A549 (cell line): ENCODE measurements at regions of chr7 and their contacts with region 1.

Region 1: GRCh38 chr7:121395961-121396757 is at the start of gene FAM3C:
- DNase-seq: peak; percentile 75 to 90
- ATAC-seq: peak; percentile 93 to 99
- H3K4me3 ChIP-seq: peak within 1 kb of the TSS; percentile 96
- H3K27ac ChIP-seq: peak within 1 kb of the TSS; percentile 78 to 95
- H3K4me1 ChIP-seq: peaks cover 24% of the 10 kb centered on the region
- CTCF ChIP-seq: peak; percentile 85
- EP300 ChIP-seq: no peak
- POLR2A ChIP-seq: peak; percentile 58
- RAD21 ChIP-seq: 0 out of 5 replicates have a peak, but pooled peaks of 1 of the 2 experiments have one; percentile 32
- polyA plus RNA-seq, gene FAM3C: 28.7 and 46.4 TPM in 2 replicates

Region 2: GRCh38 chr7:120950539-120951308 is 445.4 kb before region 1 on chr7 and contains the start of gene ING3:
- CTCF ChIA-PET with region 1: no interaction called
- POLR2A ChIA-PET with region 1: interaction called, 10 read pairs
- DNase-seq: peak; percentile 72 to 97
- ATAC-seq: peak; percentile 99
- H3K4me3 ChIP-seq: peak within 1 kb of the TSS; percentile 68
- H3K27ac ChIP-seq: peak within 1 kb of the TSS; percentile 95 to 97
- H3K4me1 ChIP-seq: peaks cover 11% of the 10 kb centered on the region; the same call in 2 of the 3 replicates
- CTCF ChIP-seq: no peak
- EP300 ChIP-seq: no peak
- POLR2A ChIP-seq: peak; percentile 42
- RAD21 ChIP-seq: no peak
- polyA plus RNA-seq, gene ING3: 6.9 and 11.3 TPM in 2 replicates

Region 3: GRCh38 chr7:121313793-121314676 is 82.1 kb before region 1 on chr7:
- CTCF ChIA-PET with region 1: no interaction called
- POLR2A ChIA-PET with region 1: no interaction called
- DNase-seq: no peak
- ATAC-seq: no peak
- H3K4me3 ChIP-seq: no peak overlapping the region
- H3K27ac ChIP-seq: no peak overlapping the region
- H3K4me1 ChIP-seq: no peaks in the 10 kb centered on the region
- CTCF ChIP-seq: no peak
- EP300 ChIP-seq: no peak
- POLR2A ChIP-seq: no peak
- RAD21 ChIP-seq: no peak

Region 4: DNA sequence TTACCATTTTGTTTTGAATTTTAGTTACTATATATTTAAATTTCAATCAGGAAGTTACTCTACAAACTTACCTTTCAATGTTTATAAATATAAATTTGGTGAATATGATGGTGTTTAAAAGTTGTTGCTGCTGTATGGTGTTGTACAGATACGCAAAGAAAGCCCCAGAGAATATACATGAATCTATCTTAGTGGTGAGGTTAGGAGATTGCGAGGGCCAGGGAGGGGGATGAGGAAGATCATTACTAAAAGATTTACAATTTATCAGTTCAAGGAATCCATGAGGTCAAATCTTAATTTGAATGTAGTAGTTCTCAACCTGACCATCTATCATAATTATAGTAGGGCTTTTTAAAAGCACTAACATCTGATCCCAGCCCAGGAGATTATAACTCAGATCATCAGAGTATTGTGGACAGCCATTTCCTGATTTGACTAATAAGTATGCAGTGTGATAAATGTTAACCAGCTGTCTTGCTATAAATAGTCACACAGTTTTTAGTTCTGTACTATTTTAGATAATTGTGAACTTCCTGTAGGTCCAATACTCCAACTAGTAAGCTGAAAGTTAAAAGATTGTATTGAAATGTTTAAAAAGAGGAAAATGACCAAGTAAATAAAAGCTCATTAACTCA is 23.7 kb before region 1 on chr7:
- CTCF ChIA-PET with region 1: interaction called, 21 read pairs
- POLR2A ChIA-PET with region 1: no interaction called
- DNase-seq: no peak
- ATAC-seq: no peak
- H3K4me3 ChIP-seq: no peak overlapping the region
- H3K27ac ChIP-seq: no peak overlapping the region
- H3K4me1 ChIP-seq: peaks cover 5% of the 10 kb centered on the region; the same call in 2 of the 3 replicates
- CTCF ChIP-seq: no peak
- EP300 ChIP-seq: no peak
- POLR2A ChIP-seq: no peak
- RAD21 ChIP-seq: no peak

Region 5: DNA sequence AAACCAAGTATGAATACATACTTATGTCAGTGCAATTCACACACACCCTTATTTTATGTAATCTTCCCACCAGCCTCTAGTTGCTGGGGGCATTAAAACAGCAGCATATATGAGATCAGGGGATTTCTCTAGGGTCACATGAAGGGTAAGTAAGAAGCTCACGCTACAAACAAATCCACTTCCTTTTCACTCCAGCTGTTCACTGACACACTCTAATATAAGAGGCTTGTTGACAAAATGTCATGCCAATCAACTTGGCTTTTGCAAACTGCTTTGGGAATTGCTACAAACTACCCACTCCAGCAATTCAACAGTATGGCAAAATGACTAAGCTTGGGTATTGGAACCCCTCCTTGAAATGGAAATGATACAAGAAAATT is 10.4 kb before region 1 on chr7:
- CTCF ChIA-PET with region 1: interaction called, 62 read pairs
- POLR2A ChIA-PET with region 1: interaction called, 8 read pairs
- DNase-seq: no peak
- ATAC-seq: no peak
- H3K4me3 ChIP-seq: no peak overlapping the region
- H3K27ac ChIP-seq: no peak overlapping the region
- H3K4me1 ChIP-seq: no peaks in the 10 kb centered on the region
- CTCF ChIP-seq: no peak
- EP300 ChIP-seq: no peak
- POLR2A ChIP-seq: no peak
- RAD21 ChIP-seq: no peak

Region 6: GRCh38 chr7:121547544-121548092 is 151.5 kb after region 1 on chr7:
- CTCF ChIA-PET with region 1: interaction called, 4 read pairs
- POLR2A ChIA-PET with region 1: interaction called, 12 read pairs
- DNase-seq: peak; percentile 59 to 66
- ATAC-seq: peak; percentile 91 to 97
- H3K4me3 ChIP-seq: no peak overlapping the region
- H3K27ac ChIP-seq: no peak overlapping the region
- H3K4me1 ChIP-seq: peaks cover 11% of the 10 kb centered on the region; the same call in 2 of the 3 replicates
- CTCF ChIP-seq: peak; percentile 88
- EP300 ChIP-seq: no peak
- POLR2A ChIP-seq: no peak
- RAD21 ChIP-seq: peak; percentile 85 to 89